Colonic mucosa (tissue), 4 donors: ENCODE measurements at regions of chr10 and their contacts with region 1.

Region 1: GRCh38 chr10:114550756-114551635 is 107.1 kb downstream of the ABLIM1 start:
- DNase-seq: peak; percentile 85
- H3K4me3 ChIP-seq: no peak overlapping the region
- H3K27ac ChIP-seq: peak overlapping the region; percentile 52
- H3K4me1 ChIP-seq: no peaks in the 10 kb centered on the region
- H3K27me3 ChIP-seq: no peaks in the 10 kb centered on the region
- CTCF ChIP-seq: peak; percentile 44

Region 2: GRCh38 chr10:112716924-112717413 is 1834.0 kb before region 1 on chr10:
- intact Hi-C with region 1: no loop called
- DNase-seq: peak; percentile 52
- H3K4me3 ChIP-seq: no peak overlapping the region
- H3K27ac ChIP-seq: no peak overlapping the region
- H3K4me1 ChIP-seq: no peaks in the 10 kb centered on the region
- H3K27me3 ChIP-seq: no peaks in the 10 kb centered on the region
- CTCF ChIP-seq: no peak

Region 3: DNA sequence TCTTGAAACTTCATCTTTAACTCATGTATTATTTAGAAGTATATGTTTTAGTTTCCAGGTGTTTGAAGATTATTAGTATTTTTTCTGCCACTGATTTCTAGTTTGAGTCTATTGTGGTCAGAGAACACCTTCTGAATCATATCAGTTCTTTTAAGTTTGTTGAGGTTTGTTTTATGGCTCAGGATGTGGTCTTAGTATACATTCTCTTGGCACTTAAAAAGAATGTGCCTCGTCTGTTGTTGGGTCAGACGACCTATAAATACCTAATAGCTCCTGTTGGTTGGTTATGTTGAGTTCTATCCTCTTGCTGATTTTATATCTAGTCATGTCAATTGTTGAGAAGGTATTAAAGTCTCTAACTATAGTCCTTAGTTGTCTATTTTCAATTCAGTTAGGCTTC is 355.9 kb before region 1 on chr10:
- intact Hi-C with region 1: no loop called
- DNase-seq: no peak
- H3K4me3 ChIP-seq: no peak overlapping the region
- H3K27ac ChIP-seq: no peak overlapping the region
- H3K4me1 ChIP-seq: no peaks in the 10 kb centered on the region
- H3K27me3 ChIP-seq: no peaks in the 10 kb centered on the region
- CTCF ChIP-seq: no peak

Region 4: GRCh38 chr10:114304017-114304570 is 246.9 kb before region 1 on chr10:
- intact Hi-C with region 1: loop called (anchors 5 kb)
- DNase-seq: peak; percentile 90
- H3K4me3 ChIP-seq: peak overlapping the region; percentile 23
- H3K27ac ChIP-seq: peak overlapping the region; percentile 33
- H3K4me1 ChIP-seq: no peaks in the 10 kb centered on the region
- H3K27me3 ChIP-seq: no peaks in the 10 kb centered on the region
- CTCF ChIP-seq: peak; percentile 68

Region 5: DNA sequence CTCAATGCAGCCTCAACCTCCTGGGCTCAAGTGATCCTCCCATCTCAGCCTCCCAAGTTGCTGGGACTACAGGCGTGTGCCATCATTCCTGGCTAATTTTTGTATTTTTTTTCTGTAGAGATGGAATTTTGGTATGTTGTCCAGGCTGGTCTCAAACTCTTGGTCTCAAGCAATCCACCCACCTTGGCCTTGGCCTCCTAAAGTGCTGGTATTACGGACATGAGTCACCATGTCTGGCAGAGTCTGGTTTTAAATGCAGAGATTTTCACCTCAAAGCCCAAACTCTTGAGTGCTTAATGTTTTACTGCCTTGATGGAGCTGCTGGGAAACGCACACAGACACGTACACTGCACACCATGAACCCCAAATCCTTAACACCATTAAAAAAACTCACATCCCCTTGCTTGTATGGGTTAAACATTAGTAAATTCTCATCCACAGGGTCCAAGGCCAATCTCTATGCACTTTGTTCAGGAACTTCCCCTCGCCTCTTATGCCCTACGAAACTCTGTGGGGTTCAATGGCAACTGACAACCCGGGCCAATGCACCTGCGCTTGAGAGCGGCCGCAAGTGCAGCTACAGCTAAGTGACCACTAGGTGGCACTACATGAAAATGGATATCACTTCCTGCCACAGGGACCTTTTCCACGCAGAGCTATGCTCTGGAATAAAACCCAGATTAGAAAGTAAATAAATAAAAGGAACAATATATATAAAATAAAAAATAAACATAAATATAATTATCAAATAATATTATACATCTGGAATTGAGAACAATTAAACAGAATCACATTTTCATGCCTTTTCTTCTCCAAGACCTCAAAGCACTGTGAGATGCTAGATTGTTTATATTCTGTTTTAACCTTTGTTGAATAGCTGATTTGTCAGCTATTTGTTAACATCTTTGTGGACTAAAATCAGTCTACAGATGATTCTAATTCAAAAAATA is 79.8 kb before region 1 on chr10:
- intact Hi-C with region 1: loop called (anchors 2 kb)
- DNase-seq: peak; percentile 71
- H3K4me3 ChIP-seq: no peak overlapping the region
- H3K27ac ChIP-seq: peak overlapping the region; percentile 16
- H3K4me1 ChIP-seq: no peaks in the 10 kb centered on the region
- H3K27me3 ChIP-seq: no peaks in the 10 kb centered on the region
- CTCF ChIP-seq: peak; percentile 87

Region 6: DNA sequence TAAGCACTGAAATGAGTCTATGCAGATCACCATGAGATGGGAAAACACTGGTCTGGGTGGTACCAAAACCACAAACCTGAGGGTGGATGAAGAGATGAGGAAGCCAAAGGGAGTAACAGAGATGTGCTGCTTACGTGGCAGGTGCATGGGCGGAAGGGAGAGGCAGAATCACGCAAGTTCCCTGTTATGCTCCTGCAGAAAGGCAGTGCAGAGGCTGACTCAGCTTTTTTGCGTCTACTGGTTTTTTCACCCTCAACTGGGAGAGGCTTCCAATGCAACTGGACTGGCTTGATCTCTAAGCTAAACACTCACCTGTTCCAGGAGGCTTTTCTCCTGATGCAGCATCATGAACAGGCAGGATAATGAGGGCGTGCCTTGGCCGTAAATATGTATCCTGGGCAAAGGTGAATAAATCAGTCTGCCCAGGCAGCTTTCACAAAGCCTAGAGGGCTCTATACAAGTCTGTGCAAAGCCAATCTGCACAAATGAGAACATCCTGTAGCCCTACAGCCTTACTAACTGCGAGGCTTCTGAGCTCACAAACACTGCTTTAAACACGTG is 51.3 kb before region 1 on chr10:
- intact Hi-C with region 1: no loop called
- DNase-seq: peak; percentile 88
- H3K4me3 ChIP-seq: no peak overlapping the region
- H3K27ac ChIP-seq: peak overlapping the region; percentile 86
- H3K4me1 ChIP-seq: no peaks in the 10 kb centered on the region
- H3K27me3 ChIP-seq: no peaks in the 10 kb centered on the region
- CTCF ChIP-seq: no peak

Region 7: GRCh38 chr10:114631666-114632417 is 80.8 kb after region 1 on chr10:
- intact Hi-C with region 1: loop called (anchors 10 kb)
- DNase-seq: peak; percentile 67
- H3K4me3 ChIP-seq: peak overlapping the region; percentile 47
- H3K27ac ChIP-seq: no peak overlapping the region
- H3K4me1 ChIP-seq: peaks cover 10% of the 10 kb centered on the region
- H3K27me3 ChIP-seq: no peaks in the 10 kb centered on the region
- CTCF ChIP-seq: no peak

Region 8: GRCh38 chr10:114694752-114695151 is 143.8 kb after region 1 on chr10:
- intact Hi-C with region 1: loop called (anchors 2 kb)
- DNase-seq: peak; percentile 52
- H3K4me3 ChIP-seq: no peak overlapping the region
- H3K27ac ChIP-seq: no peak overlapping the region
- H3K4me1 ChIP-seq: no peaks in the 10 kb centered on the region
- H3K27me3 ChIP-seq: no peaks in the 10 kb centered on the region
- CTCF ChIP-seq: peak; percentile 48

Region 9: GRCh38 chr10:114779803-114780609 is 229.0 kb after region 1 on chr10:
- intact Hi-C with region 1: loop called (anchors 5 kb)
- DNase-seq: peak; percentile 39
- H3K4me3 ChIP-seq: no peak overlapping the region
- H3K27ac ChIP-seq: peak overlapping the region; percentile 56
- H3K4me1 ChIP-seq: peaks cover 8% of the 10 kb centered on the region
- H3K27me3 ChIP-seq: no peaks in the 10 kb centered on the region
- CTCF ChIP-seq: no peak